Sigmoid colon (tissue), 7 donors: ENCODE measurements at regions of chr21 and their contacts with region 1.

Region 1: DNA sequence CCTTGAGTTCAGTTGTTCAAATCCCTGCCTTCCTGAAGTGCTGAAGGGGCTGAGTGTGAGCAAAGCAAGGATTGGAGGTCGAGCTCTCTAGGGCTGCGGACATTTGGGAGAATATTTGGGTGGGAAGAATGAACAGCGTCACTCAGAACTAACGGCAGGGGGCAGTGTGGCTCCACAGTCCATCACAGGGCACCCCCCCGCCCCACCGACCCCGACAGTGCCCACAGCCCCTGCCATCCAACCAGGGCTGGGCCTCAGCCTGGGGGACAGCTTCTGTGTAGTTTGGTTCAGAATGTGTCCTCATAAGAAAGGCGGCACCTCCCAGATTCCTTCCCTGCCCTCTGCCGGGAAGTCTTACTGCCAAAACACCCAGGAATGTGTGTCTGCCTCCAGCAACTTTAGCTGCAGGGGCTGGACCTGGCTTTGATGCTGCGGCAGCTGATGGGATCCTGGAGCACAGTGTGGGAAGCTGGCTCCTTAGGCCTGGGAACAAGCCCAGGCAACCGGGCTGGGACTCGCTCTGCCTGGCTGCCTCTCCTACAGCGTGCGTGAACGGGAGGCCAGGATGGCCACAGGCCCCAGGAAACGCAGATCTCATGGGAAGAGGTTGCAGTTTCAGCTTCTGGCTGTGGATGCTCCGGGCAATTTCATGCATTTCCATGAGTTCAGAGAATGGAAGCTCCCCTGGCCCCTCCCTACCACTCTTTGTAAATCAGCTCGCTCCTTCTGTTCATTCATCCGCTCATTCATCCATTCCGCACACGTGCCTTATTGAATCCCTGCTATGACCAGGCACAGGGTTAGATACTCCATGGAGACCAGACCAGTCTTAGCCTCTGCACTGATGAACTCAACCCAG is 104.9 kb upstream of the TMPRSS2 start:
- DNase-seq: peak; percentile 91
- H3K4me3 ChIP-seq: peak overlapping the region in 1 of 4 donors; percentile 8
- H3K27ac ChIP-seq: peak overlapping the region; percentile 68 to 77 (median 72)
- H3K4me1 ChIP-seq: peaks cover 0 to 50% (median 45%) of the 10 kb centered on the region in 4 donors
- H3K27me3 ChIP-seq: no peaks in the 10 kb centered on the region
- CTCF ChIP-seq: peak; percentile 66 to 92 (median 84)
- EP300 ChIP-seq: no peak
- POLR2A ChIP-seq: no peak

Region 2: DNA sequence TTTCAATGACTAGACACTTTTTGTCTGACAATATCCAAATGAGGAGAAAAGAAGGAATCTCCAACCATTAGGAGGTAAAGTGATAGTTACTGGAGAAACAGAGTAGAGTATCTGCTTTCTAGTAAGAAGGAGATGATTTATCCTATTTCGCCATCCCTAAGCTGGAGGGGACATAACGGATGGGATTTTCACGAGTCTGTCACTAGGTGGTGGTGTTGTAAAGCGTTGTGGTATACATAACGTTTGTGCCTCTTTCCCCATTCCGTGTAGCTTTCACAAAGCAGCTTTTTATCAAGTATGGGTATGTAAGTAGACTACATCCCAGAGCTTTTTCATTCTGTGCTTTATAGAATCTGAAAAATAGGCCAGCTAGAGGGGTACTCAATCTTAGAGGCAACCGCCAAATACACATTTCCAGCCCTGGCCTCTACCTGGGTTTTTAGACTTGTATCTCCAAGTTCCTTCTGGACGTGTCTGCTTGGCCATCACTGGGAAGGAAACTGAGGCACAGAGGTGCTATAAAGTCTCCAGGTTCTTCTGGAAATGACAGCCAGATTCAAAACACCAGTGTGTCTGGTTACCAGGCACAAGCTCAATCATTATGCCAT is 329.6 kb before region 1 on chr21:
- intact Hi-C with region 1: loop called (anchors 5 kb)
- DNase-seq: no peak
- H3K4me3 ChIP-seq: no peak overlapping the region
- H3K27ac ChIP-seq: no peak overlapping the region
- H3K4me1 ChIP-seq: peaks cover 0 to 3% (median 0%) of the 10 kb centered on the region in 4 donors
- H3K27me3 ChIP-seq: peaks cover 0 to 5% (median 0%) of the 10 kb centered on the region in 3 donors
- CTCF ChIP-seq: peak; percentile 56 to 74 (median 65)
- EP300 ChIP-seq: no peak
- POLR2A ChIP-seq: no peak

Region 3: DNA sequence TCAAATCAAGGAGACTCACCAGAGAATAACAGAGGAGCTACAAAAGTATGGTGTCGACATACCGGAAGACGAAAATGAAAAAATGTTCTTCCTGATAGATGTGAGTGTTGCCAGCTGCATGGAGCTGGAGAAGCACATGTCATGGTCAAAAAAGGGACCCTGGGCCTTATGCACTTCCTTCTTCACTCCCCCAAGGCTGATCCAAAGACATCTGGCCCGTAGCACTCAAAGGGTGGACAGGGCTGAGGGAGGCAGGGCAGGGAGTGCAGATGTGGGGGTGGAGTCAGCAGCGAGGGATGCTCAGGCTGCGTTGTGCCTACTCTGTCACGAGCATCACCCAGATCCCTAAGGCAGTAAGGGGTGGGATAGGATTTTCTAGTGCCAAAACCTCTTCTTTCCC is 167.4 kb before region 1 on chr21:
- intact Hi-C with region 1: no loop called
- DNase-seq: no peak
- H3K4me3 ChIP-seq: no peak overlapping the region
- H3K27ac ChIP-seq: no peak overlapping the region
- H3K4me1 ChIP-seq: no peaks in the 10 kb centered on the region
- H3K27me3 ChIP-seq: no peaks in the 10 kb centered on the region
- CTCF ChIP-seq: no peak
- EP300 ChIP-seq: no peak
- POLR2A ChIP-seq: no peak

Region 4: DNA sequence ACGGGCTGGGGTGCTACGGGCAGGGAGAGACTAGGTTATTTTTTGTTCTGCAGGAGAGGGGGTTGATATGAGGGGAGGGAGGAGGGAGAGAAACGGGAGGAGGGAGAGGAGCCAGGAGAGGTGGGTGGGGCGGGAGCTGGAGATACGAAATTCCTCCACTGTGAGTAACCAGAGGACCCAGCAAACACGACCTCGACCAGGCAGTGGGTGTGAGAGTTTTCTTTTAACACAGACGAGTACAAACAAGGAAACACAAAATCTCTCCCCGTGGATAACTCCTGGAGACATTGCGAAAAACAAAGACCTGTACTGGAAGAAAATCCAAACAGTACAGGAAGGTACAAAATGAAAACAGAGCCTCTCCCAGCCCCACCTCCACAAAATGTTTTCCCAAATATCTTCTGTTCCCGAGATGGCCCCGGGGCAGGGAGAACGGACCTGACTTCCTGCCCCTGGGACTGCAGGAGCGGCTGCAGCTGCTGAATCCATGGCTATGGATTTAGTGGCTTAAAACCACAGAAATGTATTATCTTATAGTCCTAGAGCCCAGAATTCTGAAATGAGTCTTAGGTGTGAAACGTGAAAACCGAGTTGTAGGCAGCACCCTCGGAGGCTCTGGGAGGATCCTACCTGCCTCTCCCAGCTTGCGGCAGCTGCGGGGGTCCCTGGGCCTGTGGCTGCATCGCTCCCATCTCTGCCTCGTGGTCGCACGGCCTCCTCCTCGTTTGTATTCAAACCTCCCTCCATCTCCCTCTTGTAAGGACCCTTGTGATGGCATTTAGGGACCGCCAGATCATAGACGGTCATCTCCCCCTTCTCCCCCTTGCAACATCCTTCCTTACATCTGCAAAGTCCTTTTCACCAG is 71.7 kb after region 1 on chr21:
- intact Hi-C with region 1: no loop called
- DNase-seq: no peak
- H3K4me3 ChIP-seq: no peak overlapping the region
- H3K27ac ChIP-seq: no peak overlapping the region
- H3K4me1 ChIP-seq: no peaks in the 10 kb centered on the region
- H3K27me3 ChIP-seq: no peaks in the 10 kb centered on the region
- CTCF ChIP-seq: no peak
- EP300 ChIP-seq: no peak
- POLR2A ChIP-seq: no peak

Region 5: DNA sequence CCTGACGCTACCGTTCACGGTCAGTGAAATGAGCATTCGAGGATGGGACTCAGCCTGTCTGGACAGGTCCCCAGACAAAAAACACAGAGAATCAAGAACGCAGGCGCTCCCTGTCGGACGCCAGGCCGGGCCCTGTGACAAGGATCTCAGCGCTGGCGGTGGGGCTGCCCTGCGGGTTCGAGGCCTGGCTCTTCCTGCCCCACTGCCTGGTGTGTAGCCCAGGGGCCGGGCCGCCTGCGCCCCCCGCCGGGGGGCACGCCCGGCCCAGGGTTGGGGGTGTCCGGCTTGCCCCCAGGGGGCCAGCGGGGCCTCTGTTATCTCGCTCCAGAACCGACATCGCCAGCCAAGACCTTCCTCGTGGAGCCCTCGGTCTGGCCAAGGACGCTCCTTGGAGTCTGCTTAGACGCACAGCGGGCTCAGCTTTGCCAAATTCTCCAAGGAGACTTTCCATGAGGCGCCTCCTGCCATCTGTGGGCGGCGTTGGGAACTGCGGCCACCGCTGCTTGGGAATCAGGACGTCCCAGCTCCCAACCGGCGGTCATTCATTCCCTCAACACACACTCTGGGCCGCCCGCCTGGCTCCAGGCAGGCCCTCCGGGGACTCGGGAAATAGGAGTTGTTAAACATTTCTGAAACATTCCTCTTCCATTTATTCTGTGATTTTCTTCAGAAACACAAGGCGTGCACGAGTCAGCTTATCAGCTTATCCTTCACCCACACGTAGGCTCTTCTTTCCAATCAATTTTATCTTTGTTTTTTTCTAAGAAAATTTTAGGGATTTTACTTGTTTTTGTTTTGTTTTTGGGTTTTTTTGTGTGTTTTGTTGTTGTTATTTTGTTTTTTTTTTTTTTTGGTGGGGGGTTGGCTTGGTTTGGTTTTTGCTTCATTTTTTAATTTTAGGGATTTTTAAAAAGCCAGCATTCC is 165.3 kb after region 1 on chr21:
- intact Hi-C with region 1: loop called (anchors 1 kb)
- DNase-seq: peak; percentile 94
- H3K4me3 ChIP-seq: no peak overlapping the region
- H3K27ac ChIP-seq: peak overlapping the region in 2 of 4 donors; percentile 35 to 54
- H3K4me1 ChIP-seq: peaks cover 0 to 8% (median 6%) of the 10 kb centered on the region in 4 donors
- H3K27me3 ChIP-seq: peaks cover 9 to 75% (median 16%) of the 10 kb centered on the region in 3 donors
- CTCF ChIP-seq: peak; percentile 77 to 96 (median 92)
- EP300 ChIP-seq: no peak
- POLR2A ChIP-seq: no peak

Region 6: GRCh38 chr21:41816220-41817165 is 203.6 kb after region 1 on chr21:
- intact Hi-C with region 1: loop called (anchors 1 kb)
- DNase-seq: peak; percentile 82
- H3K4me3 ChIP-seq: no peak overlapping the region
- H3K27ac ChIP-seq: no peak overlapping the region
- H3K4me1 ChIP-seq: peaks cover 0 to 8% (median 3%) of the 10 kb centered on the region in 4 donors
- H3K27me3 ChIP-seq: no peaks in the 10 kb centered on the region
- CTCF ChIP-seq: peak in 3 of 4 experiments; percentile 51 to 80 (median 74)
- EP300 ChIP-seq: no peak
- POLR2A ChIP-seq: no peak

Region 7: DNA sequence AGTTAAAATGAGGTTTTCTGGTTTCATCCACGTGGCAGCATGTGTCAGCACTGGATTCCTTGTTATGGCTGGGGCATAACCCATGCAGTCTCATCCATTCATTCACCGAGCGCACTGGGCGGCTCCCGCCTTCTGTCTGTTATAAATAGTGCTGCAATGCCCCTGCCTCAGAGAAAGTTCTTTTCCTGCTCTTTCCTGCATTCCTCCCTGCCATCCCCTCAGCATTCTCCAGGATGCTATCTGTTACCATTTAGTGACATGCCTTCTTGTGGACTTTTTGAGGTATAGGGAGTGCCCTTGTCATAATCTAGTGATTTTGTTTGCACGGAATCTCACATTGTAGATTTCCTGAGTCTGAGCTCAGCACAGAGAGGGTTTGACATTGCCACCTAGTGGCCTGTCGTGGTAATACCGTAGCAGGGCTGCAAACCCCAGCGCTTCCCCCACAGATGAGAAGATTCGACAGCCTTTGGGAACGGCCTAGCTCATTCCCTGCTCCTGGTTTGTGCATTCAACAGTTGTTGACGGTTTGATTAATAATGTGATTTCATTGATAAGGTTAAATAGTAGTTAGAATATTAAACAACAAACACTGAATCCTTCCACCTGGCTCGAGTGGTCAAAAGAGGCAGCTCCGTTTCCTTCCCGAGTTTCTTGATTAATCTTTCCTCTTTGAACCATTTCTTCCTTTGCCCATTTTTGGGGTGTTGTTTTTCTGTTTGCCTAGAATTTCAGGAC is 504.5 kb after region 1 on chr21:
- intact Hi-C with region 1: loop called (anchors 2 kb)
- DNase-seq: peak; percentile 85
- H3K4me3 ChIP-seq: peak overlapping the region in 1 of 4 donors; percentile 18
- H3K27ac ChIP-seq: no peak overlapping the region
- H3K4me1 ChIP-seq: peaks cover 0 to 8% (median 4%) of the 10 kb centered on the region in 4 donors
- H3K27me3 ChIP-seq: peaks cover 0 to 45% (median 10%) of the 10 kb centered on the region in 3 donors
- CTCF ChIP-seq: peak; percentile 86 to 96 (median 94)
- EP300 ChIP-seq: no peak
- POLR2A ChIP-seq: no peak